Naive thymus-derived CD4-positive, alpha-beta T cell (primary cell): ENCODE measurements at regions of chrX and their contacts with region 1.

Region 1: GRCh38 chrX:30577362-30577991 is at the start of gene TASL:
- DNase-seq: peak in 8 of 9 donors; percentile 23 to 53 (median 30)
- ATAC-seq: peak; percentile 85
- H3K4me3 ChIP-seq: peak within 1 kb of the TSS; percentile 58
- H3K4me3 Mint-ChIP-seq: peak within 1 kb of the TSS; percentile 82 to 96 (median 88)
- H3K27ac ChIP-seq: peak within 1 kb of the TSS; percentile 65
- H3K27ac Mint-ChIP-seq: peak within 1 kb of the TSS; percentile 88 to 99 (median 96)
- H3K4me1 ChIP-seq: no peaks in the 10 kb centered on the region
- H3K4me1 Mint-ChIP-seq: peaks cover 0 to 24% (median 18%) of the 10 kb centered on the region in 7 donors
- H3K27me3 ChIP-seq: no peaks in the 10 kb centered on the region
- H3K27me3 Mint-ChIP-seq: no peaks in the 10 kb centered on the region
- total RNA-seq, gene TASL: 2.1 to 10.5 (median 4.6) TPM

Region 2: DNA sequence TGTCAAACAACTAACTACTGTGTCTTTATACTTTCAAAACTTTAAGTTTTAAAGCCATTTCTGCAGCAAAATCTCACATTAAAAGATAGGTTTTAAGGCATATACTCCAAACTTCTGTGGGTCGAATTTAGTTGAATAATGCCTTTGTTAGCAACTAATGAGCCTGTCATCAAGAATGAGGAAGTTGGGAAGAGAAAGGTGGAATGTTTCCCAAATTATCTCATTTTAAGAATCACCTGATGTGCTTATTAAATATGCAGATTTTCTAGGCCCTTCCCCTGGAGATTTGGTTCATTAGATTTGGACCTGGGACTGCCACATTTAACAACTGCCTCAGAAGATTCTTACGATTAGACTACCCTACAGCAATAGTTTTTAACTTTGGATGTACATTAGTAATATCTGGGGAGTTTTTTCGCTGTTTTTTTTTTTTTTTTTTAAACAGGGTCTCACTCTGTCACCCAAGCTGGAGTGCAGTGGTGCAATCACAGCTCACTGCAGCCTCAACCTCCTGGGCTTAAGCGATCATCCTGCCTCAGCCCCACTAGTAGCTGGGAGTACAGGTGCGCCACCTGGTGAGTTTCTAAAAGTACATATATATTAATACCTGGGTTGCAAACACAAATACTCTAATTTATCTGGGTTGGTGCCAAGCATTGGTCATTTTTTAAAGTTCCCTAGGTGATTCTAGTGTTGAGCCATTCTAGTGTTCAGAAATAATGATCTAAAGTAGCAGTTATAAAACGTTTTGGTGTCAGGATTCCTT is 16.1 kb after region 1 on chrX:
- CTCF ChIA-PET with region 1: interaction called, 15 read pairs
- POLR2A ChIA-PET with region 1: no interaction called
- intact Hi-C with region 1: loop called in 1 of 2 experiments (anchors 2 kb)
- DNase-seq: peak in 4 of 9 donors; percentile 24 to 39 (median 25)
- ATAC-seq: no peak
- H3K4me3 ChIP-seq: no peak overlapping the region
- H3K4me3 Mint-ChIP-seq: peak overlapping the region in 1 of 10 donors; percentile 1
- H3K27ac ChIP-seq: no peak overlapping the region
- H3K27ac Mint-ChIP-seq: no peak overlapping the region
- H3K4me1 ChIP-seq: no peaks in the 10 kb centered on the region
- H3K4me1 Mint-ChIP-seq: peaks cover 0 to 22% (median 4%) of the 10 kb centered on the region in 7 donors
- H3K27me3 ChIP-seq: no peaks in the 10 kb centered on the region
- H3K27me3 Mint-ChIP-seq: peaks cover 0 to 3% (median 0%) of the 10 kb centered on the region in 5 donors

Region 3: DNA sequence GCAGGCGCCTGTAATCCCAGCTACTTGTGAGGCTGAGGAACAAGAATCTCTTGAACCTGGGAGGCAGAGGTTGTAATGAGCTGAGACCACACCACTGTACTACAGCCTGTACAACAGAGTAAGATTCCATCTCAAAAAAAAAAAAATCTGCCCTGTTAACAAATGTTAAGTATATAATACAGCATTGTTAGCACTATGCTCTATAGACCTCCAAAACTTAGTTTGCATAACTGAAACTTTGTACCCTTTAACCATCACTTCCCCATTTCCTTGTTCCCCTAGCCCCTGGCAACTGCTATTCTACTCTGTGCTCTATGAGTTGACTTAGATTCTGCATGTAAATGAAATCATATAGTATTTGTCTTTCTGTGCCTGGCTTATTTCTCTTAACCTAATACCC is 234.8 kb after region 1 on chrX:
- CTCF ChIA-PET with region 1: no interaction called
- POLR2A ChIA-PET with region 1: no interaction called
- intact Hi-C with region 1: no loop called
- DNase-seq: no peak
- ATAC-seq: no peak
- H3K4me3 ChIP-seq: no peak overlapping the region
- H3K4me3 Mint-ChIP-seq: no peak overlapping the region
- H3K27ac ChIP-seq: no peak overlapping the region
- H3K27ac Mint-ChIP-seq: no peak overlapping the region
- H3K4me1 ChIP-seq: no peaks in the 10 kb centered on the region
- H3K4me1 Mint-ChIP-seq: peaks cover 0 to 1% (median 0%) of the 10 kb centered on the region in 7 donors
- H3K27me3 ChIP-seq: no peaks in the 10 kb centered on the region
- H3K27me3 Mint-ChIP-seq: no peaks in the 10 kb centered on the region

Region 4: DNA sequence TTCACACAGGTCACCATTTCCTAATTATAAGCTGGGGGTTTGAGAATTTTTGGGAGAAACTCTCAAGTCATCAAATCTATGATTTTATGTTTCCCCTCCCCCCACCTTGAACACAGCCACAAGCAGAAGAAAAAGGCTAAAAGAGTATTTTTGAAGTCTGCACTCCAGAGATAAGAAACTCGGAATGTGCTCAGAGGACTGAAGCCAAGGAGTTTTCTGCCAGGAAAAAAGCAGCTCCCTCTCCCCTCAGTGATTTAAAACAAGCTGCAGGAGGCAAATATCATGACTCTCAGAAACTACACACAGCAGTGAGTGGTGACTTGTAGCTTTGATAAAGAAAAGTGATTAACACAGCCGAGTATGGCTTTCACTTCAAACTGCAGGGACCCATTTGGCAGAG is 1294.5 kb after region 1 on chrX:
- CTCF ChIA-PET with region 1: no interaction called
- POLR2A ChIA-PET with region 1: no interaction called
- intact Hi-C with region 1: no loop called
- DNase-seq: no peak
- ATAC-seq: no peak
- H3K4me3 ChIP-seq: no peak overlapping the region
- H3K4me3 Mint-ChIP-seq: no peak overlapping the region
- H3K27ac ChIP-seq: no peak overlapping the region
- H3K27ac Mint-ChIP-seq: no peak overlapping the region
- H3K4me1 ChIP-seq: no peaks in the 10 kb centered on the region
- H3K4me1 Mint-ChIP-seq: no peaks in the 10 kb centered on the region
- H3K27me3 ChIP-seq: no peaks in the 10 kb centered on the region
- H3K27me3 Mint-ChIP-seq: no peaks in the 10 kb centered on the region